Astrocyte of the cerebellum (primary cell): ENCODE measurements at regions of chr9 and their contacts with region 1.

Region 1: DNA sequence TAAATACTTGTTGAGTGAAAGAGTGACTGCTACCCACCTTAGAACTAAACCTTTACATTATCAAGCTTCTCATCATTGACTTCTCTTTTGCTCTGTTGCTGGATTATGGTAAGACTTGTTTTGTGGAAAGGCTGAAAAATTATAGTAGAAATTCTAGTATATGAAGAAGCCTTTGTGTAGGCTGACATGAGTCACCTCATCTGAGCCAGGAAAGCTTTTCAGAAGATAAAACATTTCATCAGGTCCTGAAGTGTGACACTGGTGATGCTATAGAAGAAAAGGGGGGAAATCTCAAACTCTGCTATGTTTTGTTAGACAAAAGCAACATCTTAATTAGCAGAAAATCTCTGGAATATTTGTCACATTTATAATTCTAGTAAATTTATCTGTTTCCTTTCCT is 18.4 kb upstream of the SLC44A1 start:
- DNase-seq: no peak
- H3K4me3 ChIP-seq: no peak overlapping the region
- CTCF ChIP-seq: no peak

Region 2: DNA sequence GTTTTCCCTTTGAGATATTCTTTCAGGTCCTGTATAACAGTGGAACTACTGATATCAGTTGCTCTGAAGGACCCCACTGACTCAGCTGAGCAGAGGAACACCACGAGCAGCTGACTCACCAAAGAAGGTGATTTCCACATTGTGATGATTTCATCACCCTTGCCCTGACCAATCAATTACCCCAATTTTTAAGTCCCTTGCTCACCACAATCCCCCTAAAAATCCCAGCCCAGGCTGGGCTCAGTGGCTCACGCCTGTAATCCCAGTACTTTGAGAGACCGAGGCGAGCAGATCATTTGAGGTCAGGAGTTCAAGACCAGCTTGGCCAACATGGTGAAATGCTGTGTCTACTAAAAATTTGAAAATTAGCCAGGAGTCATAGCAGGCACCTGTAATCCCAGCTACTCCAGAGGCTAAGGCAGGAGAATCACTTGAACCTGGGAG is 172.8 kb before region 1 on chr9:
- in situ Hi-C with region 1: no loop called
- DNase-seq: peak; percentile 47
- H3K4me3 ChIP-seq: no peak overlapping the region
- CTCF ChIP-seq: no peak

Region 3: GRCh38 chr9:105150991-105151685 is 74.9 kb before region 1 on chr9:
- in situ Hi-C with region 1: no loop called
- DNase-seq: no peak
- H3K4me3 ChIP-seq: no peak overlapping the region
- CTCF ChIP-seq: no peak

Region 4: DNA sequence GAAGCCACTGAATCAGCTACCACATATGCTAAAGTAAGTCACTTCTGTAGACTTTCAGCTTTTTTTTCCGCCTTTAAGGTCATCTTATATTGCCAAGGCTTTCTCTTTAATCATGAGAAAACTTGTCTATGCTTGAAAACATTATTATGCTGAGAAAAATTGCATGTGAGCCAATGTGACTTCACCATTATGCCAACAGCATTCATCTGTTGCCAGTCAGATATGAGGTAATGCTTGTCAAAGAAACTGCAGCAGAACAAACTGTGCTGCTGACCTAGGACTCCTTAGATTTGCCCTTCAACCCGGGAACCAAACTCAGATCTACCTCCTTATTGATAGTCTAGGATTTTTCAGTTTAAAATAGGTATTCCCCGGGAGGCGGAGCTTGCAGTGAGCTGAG is 52.7 kb after region 1 on chr9:
- in situ Hi-C with region 1: loop called (anchors 5 kb)
- DNase-seq: no peak
- H3K4me3 ChIP-seq: no peak overlapping the region
- CTCF ChIP-seq: no peak